ENCODE measurements at regions of chr13 and their contacts with region 1.

Region 1: GRCh38 chr13:40682449-40683240 is 16.2 kb upstream of the FOXO1 start:
- DNase-seq: no peak
- H3K4me3 Mint-ChIP-seq: no peak overlapping the region
- H3K27ac Mint-ChIP-seq: no peak overlapping the region
- H3K4me1 Mint-ChIP-seq: peaks cover 7% of the 10 kb centered on the region
- H3K27me3 Mint-ChIP-seq: no peaks in the 10 kb centered on the region

Region 2: DNA sequence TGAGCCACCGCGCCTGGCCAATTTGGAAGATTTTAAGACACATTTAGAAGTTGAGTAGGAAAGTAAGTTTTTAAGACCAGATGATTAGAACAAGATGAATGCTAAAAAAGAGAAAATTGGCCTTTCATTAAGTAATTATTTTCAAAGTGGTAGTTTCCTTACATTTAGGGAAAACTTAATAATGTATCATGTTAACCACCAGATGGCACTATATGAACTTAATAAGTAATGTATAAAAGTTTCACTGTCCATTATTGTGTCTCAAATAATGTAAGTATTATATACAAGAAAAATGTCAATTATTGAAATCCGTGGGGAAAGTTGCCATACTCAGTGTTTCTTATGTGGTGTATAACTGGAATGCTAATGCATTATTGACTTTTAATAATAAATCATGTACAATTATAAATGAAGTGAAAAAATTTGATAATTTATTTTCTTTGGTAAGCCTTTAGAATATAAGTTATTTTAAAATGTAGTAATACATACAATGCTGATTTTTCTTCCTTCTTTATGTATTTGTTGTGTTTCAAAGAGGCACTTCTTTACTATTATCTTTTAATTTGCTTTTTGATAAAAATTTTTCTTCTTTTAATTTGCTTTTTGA is 998.0 kb before region 1 on chr13:
- CTCF ChIA-PET with region 1: interaction called, 52 read pairs
- POLR2A ChIA-PET with region 1: no interaction called
- intact Hi-C with region 1: no loop called
- DNase-seq: no peak
- H3K4me3 Mint-ChIP-seq: no peak overlapping the region
- H3K27ac Mint-ChIP-seq: no peak overlapping the region
- H3K4me1 Mint-ChIP-seq: peaks cover 20% of the 10 kb centered on the region
- H3K27me3 Mint-ChIP-seq: no peaks in the 10 kb centered on the region

Region 3: DNA sequence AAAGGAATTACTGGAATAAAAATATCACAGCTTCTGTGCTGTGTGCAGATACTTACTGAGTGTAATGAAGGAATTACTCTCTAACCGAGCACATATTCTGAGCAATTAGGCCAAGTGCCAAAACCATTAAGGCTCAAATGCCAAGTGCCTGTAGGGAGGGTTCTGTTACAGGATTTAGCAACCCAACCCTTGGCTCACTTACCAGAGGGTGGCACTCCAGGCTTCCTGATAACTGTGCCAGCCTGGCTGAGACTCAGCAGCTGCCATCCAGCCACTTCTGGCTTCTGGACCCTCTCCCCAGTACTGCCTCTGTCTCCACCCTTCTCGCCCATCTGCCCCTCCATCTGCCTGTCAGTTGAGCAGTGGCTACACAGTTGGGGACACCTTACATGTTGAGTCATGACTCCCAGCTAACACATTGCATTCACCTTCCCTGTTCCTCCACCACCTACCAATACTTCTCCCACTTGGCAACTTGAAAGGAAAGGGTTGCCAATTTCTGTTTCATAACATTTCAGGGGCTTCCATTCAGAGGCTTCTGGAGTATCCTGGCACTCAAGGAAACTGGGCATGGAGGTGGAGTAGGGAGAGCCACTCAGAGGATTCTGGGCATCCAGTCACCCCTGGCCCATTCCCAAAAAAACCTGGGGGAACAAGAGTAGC is 916.7 kb before region 1 on chr13:
- CTCF ChIA-PET with region 1: interaction called, 7 read pairs
- POLR2A ChIA-PET with region 1: no interaction called
- intact Hi-C with region 1: loop called (anchors 1 kb)
- DNase-seq: peak; percentile 61
- H3K4me3 Mint-ChIP-seq: no peak overlapping the region
- H3K27ac Mint-ChIP-seq: no peak overlapping the region
- H3K4me1 Mint-ChIP-seq: no peaks in the 10 kb centered on the region
- H3K27me3 Mint-ChIP-seq: no peaks in the 10 kb centered on the region

Region 4: DNA sequence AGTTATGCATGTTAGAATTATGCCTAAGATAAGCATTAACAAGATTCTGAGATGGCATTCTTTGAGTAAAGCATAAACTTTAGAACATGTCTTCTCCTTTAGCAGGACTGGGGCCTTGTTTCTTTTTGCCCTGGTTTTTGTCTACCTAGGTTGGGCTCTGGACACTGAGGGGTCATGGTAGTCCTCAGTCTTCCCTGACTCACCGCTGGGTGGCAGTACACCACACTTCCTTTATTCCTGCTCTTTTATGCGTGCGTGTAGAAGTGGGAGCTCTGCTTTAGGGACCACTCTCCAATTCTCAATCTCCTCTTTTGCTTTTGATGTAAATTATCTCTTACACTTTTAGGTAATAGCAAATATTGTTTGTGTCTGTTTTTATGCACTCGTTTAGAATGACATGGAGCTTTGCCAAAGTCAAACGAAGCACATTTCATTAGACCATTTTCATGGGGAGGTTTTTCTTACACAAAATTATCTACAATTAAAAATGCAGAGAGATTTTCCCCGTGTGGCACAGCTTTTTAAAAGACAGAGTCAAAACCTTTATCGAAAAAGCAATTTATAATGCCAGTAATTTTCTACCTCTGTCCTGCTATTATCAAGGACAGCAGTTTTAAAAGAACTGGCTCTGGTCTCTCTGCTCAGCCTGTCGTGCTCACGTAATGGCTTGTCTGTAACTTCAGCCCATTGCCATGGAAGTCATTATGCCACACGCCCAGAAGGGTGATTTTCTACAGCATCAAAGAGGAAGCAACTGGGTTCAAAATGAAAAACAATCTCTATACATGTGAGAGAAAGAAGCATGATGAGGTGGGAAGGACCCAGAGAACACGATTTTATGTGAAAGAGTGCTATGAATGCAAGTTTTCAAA is 613.2 kb before region 1 on chr13:
- CTCF ChIA-PET with region 1: interaction called, 24 read pairs
- POLR2A ChIA-PET with region 1: no interaction called
- intact Hi-C with region 1: loop called (anchors 1 kb)
- DNase-seq: peak; percentile 83
- H3K4me3 Mint-ChIP-seq: no peak overlapping the region
- H3K27ac Mint-ChIP-seq: no peak overlapping the region
- H3K4me1 Mint-ChIP-seq: peaks cover 24% of the 10 kb centered on the region
- H3K27me3 Mint-ChIP-seq: no peaks in the 10 kb centered on the region

Region 5: DNA sequence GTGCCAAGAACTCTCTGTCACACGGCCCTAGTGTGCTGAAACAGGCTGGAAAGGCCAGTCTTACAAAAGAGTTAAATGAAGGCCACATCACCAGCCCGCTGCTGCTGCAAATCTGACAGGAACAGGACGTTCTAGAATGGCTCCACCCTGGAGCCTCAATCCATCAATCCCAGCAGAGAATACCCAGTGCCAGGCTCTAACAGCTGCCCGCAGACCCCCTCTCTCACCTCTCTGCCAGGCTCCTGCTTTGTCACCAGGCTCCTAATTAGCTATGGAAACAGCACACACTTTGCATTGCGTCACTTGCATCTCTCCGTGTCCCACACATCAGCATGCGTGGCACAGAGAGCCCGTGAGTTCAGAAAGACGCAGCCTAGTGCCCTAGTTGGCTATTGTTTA is 330.3 kb before region 1 on chr13:
- CTCF ChIA-PET with region 1: no interaction called
- POLR2A ChIA-PET with region 1: no interaction called
- intact Hi-C with region 1: no loop called
- DNase-seq: no peak
- H3K4me3 Mint-ChIP-seq: no peak overlapping the region
- H3K27ac Mint-ChIP-seq: no peak overlapping the region
- H3K4me1 Mint-ChIP-seq: peaks cover 4% of the 10 kb centered on the region
- H3K27me3 Mint-ChIP-seq: no peaks in the 10 kb centered on the region

Region 6: DNA sequence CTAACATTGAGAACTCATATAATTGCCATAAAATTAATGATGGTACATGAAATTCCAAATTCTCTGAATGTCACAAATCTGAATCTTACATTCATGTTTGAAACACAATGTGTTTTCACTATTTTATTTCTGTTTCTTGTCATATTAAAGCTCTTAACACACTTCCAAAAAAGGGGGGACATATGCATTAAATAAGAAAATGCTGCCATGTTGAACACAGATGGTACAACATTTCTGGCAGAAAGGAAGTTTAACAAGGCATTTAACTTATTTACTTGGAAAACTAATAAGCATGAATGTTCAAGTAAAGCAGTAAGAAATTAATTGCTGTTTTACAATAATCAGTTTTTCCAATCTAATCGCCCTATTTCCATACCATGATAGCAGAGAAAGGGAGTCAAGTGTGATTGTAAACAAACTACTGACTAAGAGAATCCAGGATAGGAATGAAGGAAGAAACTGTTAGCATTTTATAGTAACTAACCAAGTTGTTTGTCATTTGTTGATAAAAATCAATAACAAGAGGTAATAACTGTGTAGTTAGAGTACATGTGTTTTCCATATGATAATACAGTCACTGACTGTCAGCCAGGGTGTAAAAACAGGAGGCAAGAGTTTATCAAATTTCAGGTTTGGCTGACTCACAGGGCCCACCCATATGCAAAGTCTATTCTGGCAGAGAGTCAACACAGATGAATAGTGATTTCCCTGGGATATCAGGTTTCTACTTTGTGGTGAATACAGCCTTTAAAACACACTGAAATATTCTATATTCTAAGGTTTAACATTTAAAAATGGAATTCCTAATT is 10.5 kb before region 1 on chr13:
- CTCF ChIA-PET with region 1: interaction called, 15 read pairs
- POLR2A ChIA-PET with region 1: interaction called, 3 read pairs
- intact Hi-C with region 1: no loop called
- DNase-seq: peak; percentile 32
- H3K4me3 Mint-ChIP-seq: no peak overlapping the region
- H3K27ac Mint-ChIP-seq: no peak overlapping the region
- H3K4me1 Mint-ChIP-seq: peaks cover 36% of the 10 kb centered on the region
- H3K27me3 Mint-ChIP-seq: no peaks in the 10 kb centered on the region

Measured in activated CD4-positive, alpha-beta memory T cell treated with anti-CD3 and anti-CD28 coated beads for 36 hours (primary cell).